Activated CD4-positive, alpha-beta T cell treated with anti-CD3 and anti-CD28 coated beads for 36 hours (primary cell): ENCODE measurements at regions of chr2 and their contacts with region 1.

Region 1: DNA sequence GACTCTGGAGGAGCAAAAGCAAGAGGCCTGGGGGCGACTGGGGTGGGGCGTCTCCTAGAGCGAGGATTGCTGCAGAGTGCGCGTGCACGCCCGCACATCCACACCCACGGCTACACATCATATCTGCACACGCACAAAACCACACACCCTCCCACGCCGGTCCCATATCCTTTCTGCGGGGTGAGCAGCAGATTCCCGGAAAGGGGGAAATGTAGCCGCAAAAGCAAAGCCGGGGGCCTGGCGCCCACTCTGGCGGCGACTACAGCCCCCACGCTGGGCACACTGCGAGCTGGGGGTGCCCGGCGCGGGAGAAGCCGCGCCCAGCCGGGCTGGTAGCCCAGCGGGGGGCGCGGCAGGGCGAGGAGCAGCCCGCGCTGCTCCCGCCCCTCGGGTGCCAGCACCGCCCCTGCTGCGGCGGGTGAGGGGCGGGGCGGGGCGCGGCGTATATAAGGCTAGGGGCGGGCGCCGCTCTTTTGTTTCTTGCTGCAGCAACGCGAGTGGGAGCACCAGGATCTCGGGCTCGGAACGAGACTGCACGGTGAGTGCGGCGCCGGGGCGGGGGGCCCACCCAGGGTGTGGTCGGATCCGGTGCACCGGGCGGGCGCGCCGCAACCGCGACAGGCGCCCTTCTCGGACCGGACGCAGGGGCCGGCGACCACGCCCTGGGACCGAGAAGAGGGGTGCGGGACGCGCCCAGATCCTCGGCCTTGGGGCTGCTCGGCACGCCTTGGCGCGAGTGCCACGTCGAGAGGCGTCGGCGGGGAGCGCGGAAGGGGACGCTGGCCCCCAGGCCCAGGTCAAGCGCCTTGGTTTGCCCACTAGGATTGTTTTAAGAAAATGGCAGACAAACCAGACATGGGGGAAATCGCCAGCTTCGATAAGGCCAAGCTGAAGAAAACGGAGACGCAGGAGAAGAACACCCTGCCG is at the start of gene TMSB10:
- DNase-seq: peak; percentile 93
- ATAC-seq: peak; percentile 69
- H3K4me3 Mint-ChIP-seq: peak within 1 kb of the TSS; percentile 96
- H3K27ac Mint-ChIP-seq: peak within 1 kb of the TSS; percentile 89
- H3K4me1 Mint-ChIP-seq: peaks cover 57% of the 10 kb centered on the region
- H3K27me3 Mint-ChIP-seq: no peaks in the 10 kb centered on the region
- total RNA-seq, gene TMSB10: 2,345 to 2,742 TPM

Region 2: GRCh38 chr2:84881581-84882414 is 23.6 kb before region 1 on chr2:
- CTCF ChIA-PET with region 1: interaction called, 21 read pairs
- POLR2A ChIA-PET with region 1: interaction called, 19 read pairs
- intact Hi-C with region 1: loop called (anchors 1 kb)
- DNase-seq: peak; percentile 95
- ATAC-seq: peak; percentile 75
- H3K4me3 Mint-ChIP-seq: peak overlapping the region; percentile 82
- H3K27ac Mint-ChIP-seq: peak overlapping the region; percentile 91
- H3K4me1 Mint-ChIP-seq: peaks cover 58% of the 10 kb centered on the region
- H3K27me3 Mint-ChIP-seq: no peaks in the 10 kb centered on the region

Region 3: GRCh38 chr2:84894758-84895520 is 10.5 kb before region 1 on chr2:
- CTCF ChIA-PET with region 1: interaction called, 6 read pairs
- POLR2A ChIA-PET with region 1: interaction called, 3 read pairs
- intact Hi-C with region 1: loop called in 1 of 2 experiments (anchors 1 kb)
- DNase-seq: peak; percentile 39
- ATAC-seq: peak; percentile 35
- H3K4me3 Mint-ChIP-seq: peak overlapping the region; percentile 13
- H3K27ac Mint-ChIP-seq: peak overlapping the region; percentile 68
- H3K4me1 Mint-ChIP-seq: peaks cover 63% of the 10 kb centered on the region
- H3K27me3 Mint-ChIP-seq: no peaks in the 10 kb centered on the region

Region 4: DNA sequence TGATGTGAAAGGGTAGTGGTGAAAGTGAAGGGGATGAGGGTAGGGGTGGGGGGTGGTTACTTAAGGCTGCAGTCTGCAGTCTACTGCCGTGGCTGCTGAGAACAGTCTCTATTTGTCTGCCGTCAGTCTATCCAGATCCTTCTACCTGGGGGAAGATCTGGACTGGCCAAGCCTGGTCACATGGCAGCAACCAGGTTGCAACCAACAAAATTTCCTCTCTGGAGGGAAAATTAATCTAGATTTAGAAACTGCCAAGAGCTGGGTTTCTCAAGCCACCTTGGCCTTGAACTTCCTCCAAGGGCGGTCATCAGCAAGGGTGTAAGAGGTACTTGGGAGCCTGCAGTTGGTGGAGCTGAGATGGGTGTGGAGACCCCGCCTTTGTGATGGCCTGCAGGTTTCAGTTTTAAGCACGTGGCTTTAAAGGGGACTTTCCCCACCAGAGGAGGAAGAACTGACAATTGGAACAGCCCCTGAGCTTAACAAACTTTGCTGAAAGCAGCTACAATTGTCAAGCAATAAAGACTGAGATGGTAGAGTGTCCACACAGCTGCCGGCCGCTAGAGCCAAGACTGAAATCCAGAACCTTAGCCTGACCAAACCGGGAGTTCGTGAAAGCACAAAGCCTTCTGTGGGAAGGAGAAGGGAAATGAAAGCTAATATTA is 34.1 kb after region 1 on chr2:
- CTCF ChIA-PET with region 1: no interaction called
- POLR2A ChIA-PET with region 1: interaction called, 5 read pairs
- intact Hi-C with region 1: loop called in 1 of 2 experiments (anchors 1 kb)
- DNase-seq: peak; percentile 83
- ATAC-seq: peak; percentile 76
- H3K4me3 Mint-ChIP-seq: peak overlapping the region; percentile 67
- H3K27ac Mint-ChIP-seq: peak overlapping the region; percentile 98
- H3K4me1 Mint-ChIP-seq: peaks cover 70% of the 10 kb centered on the region
- H3K27me3 Mint-ChIP-seq: no peaks in the 10 kb centered on the region

Region 5: GRCh38 chr2:84970868-84971509 is 65.5 kb after region 1 on chr2 and contains the start of gene KCMF1:
- CTCF ChIA-PET with region 1: no interaction called
- POLR2A ChIA-PET with region 1: interaction called, 4 read pairs
- intact Hi-C with region 1: loop called in 1 of 2 experiments (anchors 1 kb)
- DNase-seq: peak; percentile 83
- ATAC-seq: peak; percentile 69
- H3K4me3 Mint-ChIP-seq: peak within 1 kb of the TSS; percentile 98
- H3K27ac Mint-ChIP-seq: peak within 1 kb of the TSS; percentile 100
- H3K4me1 Mint-ChIP-seq: peaks cover 38% of the 10 kb centered on the region
- H3K27me3 Mint-ChIP-seq: no peaks in the 10 kb centered on the region
- total RNA-seq, gene KCMF1: 78.1 to 98.5 TPM